Activated B cell treated with CpG ODN at 0.5 μM for 24 hours (primary cell): ENCODE measurements at regions of chr4 and their contacts with region 1.

Region 1: GRCh38 chr4:163568843-163569242 is 74.4 kb downstream of the TMA16 start:
- DNase-seq: no peak
- ATAC-seq: peak; percentile 91
- H3K4me3 Mint-ChIP-seq: peak overlapping the region; percentile 54
- H3K27ac Mint-ChIP-seq: peak overlapping the region; percentile 80
- H3K4me1 Mint-ChIP-seq: peaks cover 82% of the 10 kb centered on the region
- H3K27me3 Mint-ChIP-seq: no peaks in the 10 kb centered on the region
- CTCF ChIP-seq: no peak

Region 2: DNA sequence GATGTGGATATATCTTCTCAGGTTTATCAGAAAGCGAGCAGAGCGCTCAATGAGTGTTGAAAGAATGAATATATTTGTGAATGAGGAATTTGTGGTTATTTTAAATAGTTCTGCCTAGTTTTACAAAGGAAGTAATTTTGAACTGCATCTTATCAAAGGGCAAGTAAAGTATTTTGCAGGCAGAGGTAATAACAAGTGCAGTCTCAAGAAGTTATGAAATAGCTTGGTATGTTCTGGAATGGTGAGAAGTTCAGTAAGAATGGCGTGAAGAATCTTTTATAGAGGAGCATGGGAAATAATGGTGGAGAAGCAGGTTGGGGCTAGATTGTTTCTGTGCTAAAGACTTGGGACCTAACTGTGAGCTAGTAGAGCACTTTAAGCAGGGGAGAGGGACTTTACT is 63.5 kb before region 1 on chr4:
- CTCF ChIA-PET with region 1: no interaction called
- POLR2A ChIA-PET with region 1: no interaction called
- intact Hi-C with region 1: no loop called
- DNase-seq: no peak
- ATAC-seq: no peak
- H3K4me3 Mint-ChIP-seq: no peak overlapping the region
- H3K27ac Mint-ChIP-seq: peak overlapping the region; percentile 32
- H3K4me1 Mint-ChIP-seq: peaks cover 54% of the 10 kb centered on the region
- H3K27me3 Mint-ChIP-seq: no peaks in the 10 kb centered on the region
- CTCF ChIP-seq: no peak

Region 3: DNA sequence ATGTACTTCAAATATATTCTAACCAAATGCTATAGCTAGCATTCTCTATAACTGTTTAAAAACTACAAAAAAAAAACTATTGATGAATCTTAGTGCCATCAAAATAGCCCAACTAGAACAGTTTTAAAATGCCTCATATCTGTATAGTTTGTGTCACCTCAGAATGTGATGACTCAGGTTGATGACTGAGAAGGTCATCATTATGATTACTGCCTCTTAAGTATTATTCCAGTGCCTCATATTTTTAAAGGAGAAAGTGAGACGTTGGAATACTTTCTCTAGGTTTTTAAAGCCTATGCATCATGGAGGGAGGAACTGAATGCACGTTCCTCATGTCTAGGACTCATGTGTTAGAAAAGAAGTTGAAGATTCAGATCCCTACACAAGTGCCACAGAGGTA is 13.9 kb after region 1 on chr4:
- CTCF ChIA-PET with region 1: interaction called, 3 read pairs
- POLR2A ChIA-PET with region 1: interaction called, 12 read pairs
- intact Hi-C with region 1: loop called (anchors 1 kb)
- DNase-seq: no peak
- ATAC-seq: no peak
- H3K4me3 Mint-ChIP-seq: no peak overlapping the region
- H3K27ac Mint-ChIP-seq: peak overlapping the region; percentile 83
- H3K4me1 Mint-ChIP-seq: peaks cover 74% of the 10 kb centered on the region
- H3K27me3 Mint-ChIP-seq: no peaks in the 10 kb centered on the region
- CTCF ChIP-seq: no peak

Region 4: GRCh38 chr4:163651761-163652160 is 82.9 kb after region 1 on chr4:
- CTCF ChIA-PET with region 1: no interaction called
- POLR2A ChIA-PET with region 1: no interaction called
- intact Hi-C with region 1: no loop called
- DNase-seq: no peak
- ATAC-seq: no peak
- H3K4me3 Mint-ChIP-seq: no peak overlapping the region
- H3K27ac Mint-ChIP-seq: no peak overlapping the region
- H3K4me1 Mint-ChIP-seq: peaks cover 12% of the 10 kb centered on the region
- H3K27me3 Mint-ChIP-seq: no peaks in the 10 kb centered on the region
- CTCF ChIP-seq: no peak

Region 5: DNA sequence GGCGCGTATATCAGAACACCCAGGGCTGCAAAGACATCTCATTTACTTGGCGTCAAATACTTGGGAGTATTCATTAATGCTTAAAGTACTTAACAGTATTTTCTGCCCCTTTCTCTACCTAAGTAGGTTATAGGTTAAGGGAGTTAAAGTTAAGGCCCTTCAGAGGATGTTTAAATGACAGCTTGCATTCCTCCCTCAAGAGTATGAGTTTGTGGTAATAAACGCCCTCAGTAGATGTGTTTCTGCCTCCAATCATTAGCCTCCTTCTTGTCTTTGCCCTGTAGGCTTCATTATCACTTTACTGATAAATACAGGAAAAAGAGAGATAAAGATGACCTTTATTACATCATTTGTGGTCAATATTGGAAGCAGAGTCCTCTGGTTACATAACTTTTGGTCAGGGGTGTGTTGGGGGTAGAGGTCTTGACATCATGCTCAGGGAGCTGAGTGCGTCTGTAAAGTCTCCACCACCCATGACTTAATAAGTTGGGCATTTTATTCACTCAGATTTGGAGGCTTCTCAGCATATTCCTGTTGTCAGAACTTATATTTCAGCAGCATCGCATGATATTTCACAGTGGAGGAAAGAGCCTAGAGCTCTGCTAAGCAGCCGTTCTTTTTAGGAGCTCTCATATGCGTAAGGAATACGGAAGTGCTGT is 1955.8 kb after region 1 on chr4:
- CTCF ChIA-PET with region 1: no interaction called
- POLR2A ChIA-PET with region 1: no interaction called
- intact Hi-C with region 1: no loop called
- DNase-seq: no peak
- ATAC-seq: no peak
- H3K4me3 Mint-ChIP-seq: no peak overlapping the region
- H3K27ac Mint-ChIP-seq: no peak overlapping the region
- H3K4me1 Mint-ChIP-seq: no peaks in the 10 kb centered on the region
- H3K27me3 Mint-ChIP-seq: no peaks in the 10 kb centered on the region
- CTCF ChIP-seq: no peak